Cardiac septum (tissue), 1 donor: ENCODE measurements at regions of chrX and their contacts with region 1.

Region 1: GRCh38 chrX:39730662-39731397 is 366.9 kb downstream of the BCOR start:
- DNase-seq: peak; percentile 81

Region 2: GRCh38 chrX:40108959-40109287 is 378.1 kb after region 1 on chrX:
- intact Hi-C with region 1: loop called (anchors 10 kb)
- DNase-seq: peak; percentile 88